Heart right ventricle (tissue), 16 donors: ENCODE measurements at regions of chr5 and their contacts with region 1.

Region 1: DNA sequence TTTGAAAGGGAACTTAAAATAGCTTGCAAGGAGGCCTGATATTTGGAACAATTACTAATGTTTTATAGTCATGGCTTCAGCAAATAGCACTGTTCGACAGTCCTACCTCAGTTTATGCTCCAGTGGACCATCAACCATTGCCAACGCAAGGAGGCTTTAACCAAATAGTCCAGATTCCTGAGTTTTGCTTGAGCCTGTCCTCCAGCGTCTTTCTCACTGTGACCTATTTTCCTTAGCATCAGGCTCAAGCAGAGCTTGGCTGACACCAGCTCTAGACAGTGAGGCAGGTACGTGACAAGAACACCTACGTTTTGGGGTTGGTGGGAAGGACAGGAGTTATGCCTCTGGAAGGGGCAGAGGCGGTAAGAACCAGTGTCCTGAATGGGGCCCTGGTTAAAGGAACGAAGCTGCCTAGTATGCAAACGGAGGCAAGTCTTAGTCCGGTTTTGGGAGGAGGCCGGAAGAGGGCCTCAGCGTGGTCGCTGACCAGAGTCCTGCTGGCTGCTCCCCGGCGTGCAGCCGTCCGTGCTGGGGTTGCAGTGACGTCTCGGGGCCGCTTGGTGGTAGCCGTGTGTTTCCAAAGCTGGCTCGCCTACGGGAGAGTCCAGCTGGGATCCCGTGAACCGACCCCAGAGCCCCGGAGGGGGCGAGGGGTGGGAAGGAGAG is 998 bp upstream of the FGF18 start:
- DNase-seq: peak; percentile 85
- ATAC-seq: peak; percentile 78 to 90 (median 86)
- H3K4me3 ChIP-seq: peak overlapping the region in 9 of 10 donors; percentile 42 to 66 (median 55)
- H3K27ac ChIP-seq: peak overlapping the region in 7 of 10 donors; percentile 7 to 90 (median 78)
- H3K4me1 ChIP-seq: peaks cover 15 to 48% (median 31%) of the 10 kb centered on the region in 9 donors
- H3K27me3 ChIP-seq: peaks cover 0 to 35% (median 0%) of the 10 kb centered on the region in 7 donors
- CTCF ChIP-seq: peak; percentile 84 to 98 (median 95)

Region 2: DNA sequence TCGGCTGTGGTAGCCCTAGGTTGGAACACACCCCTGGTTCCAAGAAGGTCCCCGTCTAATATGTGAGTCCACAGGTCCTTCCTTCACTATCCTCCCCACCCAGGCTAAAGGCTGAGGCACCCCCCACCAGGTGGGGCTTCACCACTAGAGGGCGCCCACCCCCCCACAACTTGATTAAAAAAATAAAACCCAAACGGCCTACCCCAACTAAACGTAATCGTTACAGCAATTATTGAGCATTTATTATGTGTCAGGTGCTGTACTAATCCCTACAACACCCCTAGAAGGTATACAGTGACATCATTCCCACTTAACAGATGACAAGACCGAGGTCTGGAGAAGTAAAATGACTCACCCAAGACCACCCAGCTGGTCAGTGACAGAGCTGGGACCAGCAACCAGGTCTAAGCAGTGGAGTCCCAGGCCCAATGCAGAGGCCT is 66.0 kb after region 1 on chr5:
- intact Hi-C with region 1: loop called in 3 of 10 experiments (anchors 5 to 10 kb)
- DNase-seq: no peak
- ATAC-seq: peak in 6 of 8 donors; percentile 27 to 54 (median 41)
- H3K4me3 ChIP-seq: no peak overlapping the region
- H3K27ac ChIP-seq: peak overlapping the region in 3 of 10 donors; percentile 62 to 78 (median 69)
- H3K4me1 ChIP-seq: peaks cover 0 to 16% (median 9%) of the 10 kb centered on the region in 9 donors
- H3K27me3 ChIP-seq: no peaks in the 10 kb centered on the region
- CTCF ChIP-seq: peak; percentile 46 to 79 (median 69)

Region 3: GRCh38 chr5:171623551-171624097 is 205.2 kb after region 1 on chr5:
- intact Hi-C with region 1: loop called in 2 of 10 experiments (anchors 5 to 10 kb)
- DNase-seq: no peak
- ATAC-seq: no peak
- H3K4me3 ChIP-seq: no peak overlapping the region
- H3K27ac ChIP-seq: no peak overlapping the region
- H3K4me1 ChIP-seq: peaks cover 0 to 5% (median 0%) of the 10 kb centered on the region in 9 donors
- H3K27me3 ChIP-seq: no peaks in the 10 kb centered on the region
- CTCF ChIP-seq: no peak

Region 4: DNA sequence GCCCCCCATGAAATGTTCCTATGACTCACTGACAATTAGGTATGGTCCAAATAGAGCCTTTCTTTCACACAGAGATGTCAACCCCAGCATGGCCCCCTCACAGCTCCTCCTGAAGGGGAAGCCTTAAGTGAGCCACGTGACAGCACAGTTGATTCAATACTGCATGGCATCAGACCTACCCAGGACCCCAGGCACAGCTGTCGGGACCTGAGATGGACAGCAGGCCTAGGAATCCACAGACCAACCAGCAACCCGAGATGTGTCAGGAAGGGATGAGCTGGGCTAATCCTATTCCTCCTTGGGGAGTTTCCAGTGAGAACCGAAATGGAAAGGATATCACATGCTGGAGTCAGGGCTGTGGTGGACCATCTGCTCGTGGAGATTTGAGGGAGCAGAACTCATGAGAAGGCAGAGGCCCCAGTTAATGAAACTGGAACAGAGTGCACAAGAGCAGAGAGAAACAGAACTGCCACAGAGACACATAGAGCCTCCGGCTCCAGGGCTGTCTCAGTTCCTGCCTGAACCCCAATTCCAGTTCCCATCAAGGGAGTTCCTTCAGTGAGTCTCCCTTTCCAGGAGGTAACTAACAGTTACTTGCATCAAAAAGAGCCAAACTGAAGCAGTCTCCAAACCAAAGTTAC is 325.1 kb after region 1 on chr5:
- intact Hi-C with region 1: loop called in 4 of 10 experiments (anchors 10 kb)
- DNase-seq: no peak
- ATAC-seq: no peak
- H3K4me3 ChIP-seq: no peak overlapping the region
- H3K27ac ChIP-seq: no peak overlapping the region
- H3K4me1 ChIP-seq: peaks cover 0 to 7% (median 0%) of the 10 kb centered on the region in 9 donors
- H3K27me3 ChIP-seq: no peaks in the 10 kb centered on the region
- CTCF ChIP-seq: no peak

Region 5: DNA sequence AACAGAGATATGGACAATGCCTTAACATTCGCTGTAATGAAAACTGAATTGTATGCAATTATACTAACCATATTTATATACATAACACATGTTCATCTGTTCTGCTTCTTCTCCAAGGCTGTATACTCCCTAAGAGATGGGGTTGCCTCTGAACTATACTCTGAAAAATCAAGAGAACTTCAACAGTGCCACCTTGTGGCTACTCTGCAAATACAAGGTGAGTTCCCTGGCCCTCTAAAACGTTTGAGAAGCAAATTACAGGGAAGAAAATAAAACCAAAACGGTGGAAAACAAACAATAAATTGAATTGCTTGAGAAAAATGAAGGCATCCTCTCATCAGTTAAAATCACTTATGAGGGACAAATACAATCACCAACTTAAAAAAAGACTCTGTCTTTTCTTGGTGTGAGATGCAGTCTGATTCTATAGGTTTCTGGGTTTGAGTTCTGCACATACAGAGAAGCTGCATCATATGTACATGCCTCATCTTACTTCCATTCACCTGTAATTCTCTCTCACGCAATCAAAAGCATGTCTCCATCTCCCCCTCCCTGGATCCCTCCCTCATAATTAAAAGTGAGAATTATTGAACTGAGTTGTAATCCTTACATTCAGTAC is 489.4 kb after region 1 on chr5:
- intact Hi-C with region 1: loop called (anchors 2 to 5 kb)
- DNase-seq: peak in 1 of 2 donors; percentile 47
- ATAC-seq: peak; percentile 47 to 83 (median 78)
- H3K4me3 ChIP-seq: no peak overlapping the region
- H3K27ac ChIP-seq: no peak overlapping the region
- H3K4me1 ChIP-seq: peaks cover 3 to 39% (median 30%) of the 10 kb centered on the region in 9 donors
- H3K27me3 ChIP-seq: no peaks in the 10 kb centered on the region
- CTCF ChIP-seq: peak; percentile 53 to 87 (median 81)

Region 6: DNA sequence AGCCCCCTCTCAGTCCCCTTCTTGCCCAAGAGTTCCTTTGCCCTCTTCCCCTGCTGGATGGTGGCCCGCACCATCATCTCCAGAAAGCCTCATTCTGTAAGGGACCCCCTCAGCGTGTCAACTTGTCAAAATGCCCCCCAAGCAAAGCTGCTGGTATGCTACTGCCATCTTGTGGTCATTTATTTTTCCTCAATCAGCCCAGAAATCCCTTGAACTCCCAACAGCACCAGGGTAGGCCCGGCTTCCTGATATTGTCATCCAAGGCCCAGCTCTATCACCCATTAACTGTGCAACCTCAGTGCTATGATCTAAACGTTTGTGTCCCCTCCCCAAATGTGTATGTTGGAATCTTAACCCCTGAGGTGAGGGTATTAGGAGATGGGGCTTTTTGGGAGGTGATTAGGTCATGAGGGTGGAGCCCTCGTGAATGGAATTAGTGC is 641.2 kb after region 1 on chr5:
- intact Hi-C with region 1: loop called in 1 of 10 experiments (anchors 10 kb)
- DNase-seq: no peak
- ATAC-seq: peak in 3 of 8 donors; percentile 13 to 28 (median 26)
- H3K4me3 ChIP-seq: no peak overlapping the region
- H3K27ac ChIP-seq: no peak overlapping the region
- H3K4me1 ChIP-seq: no peaks in the 10 kb centered on the region
- H3K27me3 ChIP-seq: no peaks in the 10 kb centered on the region
- CTCF ChIP-seq: peak in 8 of 9 donors; percentile 41 to 70 (median 60)